CD14-positive monocyte (primary cell): ENCODE measurements at regions of chr7 and their contacts with region 1.

Region 1: DNA sequence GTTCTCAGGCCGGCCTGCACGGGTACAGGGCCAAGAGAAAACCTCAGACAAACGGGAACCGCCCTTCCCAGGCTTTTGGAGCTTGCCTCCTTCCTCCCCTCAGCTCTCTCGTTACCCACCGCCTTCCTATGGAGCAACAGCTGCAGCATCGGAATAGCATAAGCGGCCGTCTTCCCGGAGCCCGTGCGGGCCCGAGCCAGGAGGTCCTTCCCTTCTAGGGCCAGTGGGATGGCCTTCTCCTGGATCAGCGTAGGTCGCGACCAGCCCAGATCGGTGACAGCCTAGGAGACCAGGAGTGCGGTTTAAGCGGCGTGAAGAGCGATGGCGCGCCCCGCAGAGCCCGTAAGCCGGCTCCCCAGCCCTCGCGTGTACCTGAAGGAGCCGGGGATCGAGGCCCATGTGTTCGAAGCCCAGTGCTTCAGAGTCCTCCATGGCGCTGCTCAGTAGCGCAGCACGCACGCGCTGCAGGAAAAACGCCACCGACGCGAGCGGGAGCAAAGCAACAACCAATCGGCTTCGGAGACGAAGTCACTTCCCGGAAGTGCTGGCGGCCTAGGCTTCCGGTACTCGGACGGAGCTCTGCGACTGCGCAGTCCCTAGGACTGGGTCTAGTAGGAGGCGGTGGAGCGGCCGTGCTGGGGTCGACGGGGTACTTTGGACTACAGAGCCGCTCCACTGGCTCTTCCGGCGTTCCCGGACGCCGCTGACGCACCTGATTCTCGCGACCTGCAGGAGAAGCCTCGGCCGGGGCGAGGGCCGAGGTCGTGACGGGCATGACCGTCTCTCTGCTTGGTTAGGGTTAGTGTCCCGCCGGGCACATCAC is at the start of gene DDX56:
- DNase-seq: peak; percentile 93 to 99 (median 93)
- H3K4me3 ChIP-seq: peak within 1 kb of the TSS; percentile 65 to 88 (median 80)
- H3K4me3 Mint-ChIP-seq: peak within 1 kb of the TSS; percentile 93 to 98
- H3K27ac ChIP-seq: peak within 1 kb of the TSS; percentile 75 to 97
- H3K27ac Mint-ChIP-seq: peak within 1 kb of the TSS; percentile 95 to 99 (median 97)
- H3K4me1 ChIP-seq: peaks cover 20 to 23% of the 10 kb centered on the region in 2 donors
- H3K4me1 Mint-ChIP-seq: peaks cover 26% of the 10 kb centered on the region
- H3K27me3 ChIP-seq: no peaks in the 10 kb centered on the region
- H3K27me3 Mint-ChIP-seq: no peaks in the 10 kb centered on the region
- CTCF ChIP-seq: no peak
- polyA plus RNA-seq, gene DDX56: 32.2 to 69.3 (median 33.9) TPM

Region 2: DNA sequence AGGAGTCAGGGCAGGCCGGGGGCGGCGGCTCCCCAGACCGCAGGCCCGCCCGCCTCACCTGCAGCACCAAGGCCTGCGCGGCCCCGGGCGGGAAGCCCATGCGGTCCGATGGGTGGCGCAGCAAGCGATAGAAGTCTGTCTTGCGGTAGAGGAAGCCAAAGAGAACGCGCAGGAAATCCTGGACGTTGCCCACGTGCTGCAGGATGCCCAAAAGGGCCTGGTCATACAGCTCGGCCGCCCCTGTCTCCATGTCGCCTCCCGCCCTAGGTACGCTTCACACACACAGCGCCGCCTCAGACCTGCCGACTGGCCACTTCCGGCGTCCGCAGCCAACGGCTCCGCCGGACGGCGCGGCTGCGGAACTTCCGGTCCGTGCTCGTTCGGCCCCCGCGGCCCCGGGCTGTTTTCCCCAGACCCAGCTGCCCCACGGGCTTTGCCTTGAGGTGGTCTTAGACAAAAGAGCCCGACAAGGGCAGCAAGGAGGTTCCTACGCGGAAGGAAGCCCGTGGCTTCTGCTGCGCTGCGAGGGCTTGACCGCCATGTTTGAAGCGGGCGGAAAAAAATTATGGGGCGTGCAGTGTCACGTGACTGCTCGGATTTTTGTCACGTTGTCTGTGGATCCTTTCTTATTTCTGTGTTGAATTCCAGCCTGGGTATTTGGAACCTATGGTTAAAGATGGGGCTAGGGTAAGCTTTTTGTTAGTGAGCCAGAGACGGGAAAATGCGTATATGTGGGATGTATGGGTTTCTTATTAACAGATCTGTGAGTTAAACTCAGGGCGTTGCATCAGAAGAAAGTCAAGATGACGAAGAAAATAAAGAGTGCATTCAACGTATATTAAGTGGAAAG is 83.1 kb before region 1 on chr7 and contains the start of gene NUDCD3:
- intact Hi-C with region 1: loop called in 1 of 2 experiments (anchors 5 kb)
- DNase-seq: peak; percentile 77 to 78 (median 77)
- H3K4me3 ChIP-seq: peak within 1 kb of the TSS; percentile 60 to 80 (median 78)
- H3K4me3 Mint-ChIP-seq: peak within 1 kb of the TSS; percentile 74 to 94
- H3K27ac ChIP-seq: peak within 1 kb of the TSS; percentile 84 to 95
- H3K27ac Mint-ChIP-seq: peak within 1 kb of the TSS; percentile 86 to 98 (median 92)
- H3K4me1 ChIP-seq: peaks cover 13 to 21% of the 10 kb centered on the region in 2 donors
- H3K4me1 Mint-ChIP-seq: peaks cover 40% of the 10 kb centered on the region
- H3K27me3 ChIP-seq: no peaks in the 10 kb centered on the region
- H3K27me3 Mint-ChIP-seq: peaks cover 0 to 4% (median 2%) of the 10 kb centered on the region in 3 donors
- CTCF ChIP-seq: no peak
- polyA plus RNA-seq, gene NUDCD3: 13.6 to 26.5 (median 21.6) TPM